OCI-LY7 (cell line): ENCODE measurements at regions of chr1 and their contacts with region 1.

Region 1: GRCh38 chr1:25685938-25686665 is 69.5 kb downstream of the MAN1C1 start:
- DNase-seq: no peak
- H3K4me3 ChIP-seq: no peak overlapping the region
- H3K27ac ChIP-seq: no peak overlapping the region
- H3K4me1 ChIP-seq: peaks cover 7% of the 10 kb centered on the region
- CTCF ChIP-seq: no peak

Region 2: GRCh38 chr1:24857507-24858133 is 828.5 kb before region 1 on chr1:
- CTCF ChIA-PET with region 1: no interaction called
- POLR2A ChIA-PET with region 1: interaction called, 10 read pairs
- intact Hi-C with region 1: no loop called
- DNase-seq: peak; percentile 24
- H3K4me3 ChIP-seq: no peak overlapping the region
- H3K27ac ChIP-seq: no peak overlapping the region
- H3K4me1 ChIP-seq: no peaks in the 10 kb centered on the region
- CTCF ChIP-seq: 0 out of 2 replicates have a peak, but pooled peaks have one; percentile 19